Testis (tissue), 5 donors: ENCODE measurements at regions of chr9 and their contacts with region 1.

Region 1: DNA sequence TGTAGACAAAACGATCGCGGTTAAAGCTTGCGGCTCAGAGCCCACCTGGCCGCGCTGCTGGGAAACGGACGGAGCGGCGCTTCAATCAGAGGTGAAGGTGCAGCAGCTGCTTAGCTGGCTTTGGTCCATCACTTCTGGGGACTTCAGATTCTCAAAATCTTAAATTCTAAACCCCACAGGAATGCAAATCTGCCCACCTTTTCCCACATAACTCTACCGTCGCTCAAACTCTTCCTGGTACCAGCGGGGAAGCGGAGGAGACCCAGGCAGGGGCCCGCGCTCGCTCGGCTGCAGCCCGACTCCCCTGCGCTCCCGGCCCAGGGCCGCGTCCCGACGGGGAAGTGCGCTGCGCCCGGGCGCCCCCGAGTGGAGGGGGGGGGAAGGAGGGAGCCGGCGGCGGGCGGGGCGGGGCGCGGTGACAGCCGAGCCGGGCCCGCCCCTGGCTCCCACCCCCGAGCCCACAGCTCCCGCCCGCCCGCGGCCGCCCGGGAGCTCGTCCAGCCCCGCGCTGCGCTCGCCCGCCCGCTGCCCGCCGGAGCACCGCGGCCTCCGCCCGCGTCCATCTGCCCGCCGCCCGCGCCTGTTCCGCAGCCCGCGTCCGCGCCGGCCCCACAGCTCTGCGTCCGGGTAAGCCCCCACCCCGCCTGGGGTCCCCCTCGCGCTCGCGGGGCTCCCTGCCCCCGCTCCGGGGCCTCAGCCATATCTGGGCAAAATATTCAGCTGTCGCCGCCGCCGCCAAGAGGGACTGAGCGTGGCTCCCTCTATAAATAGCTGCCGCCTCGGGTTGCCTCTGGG is at the start of gene TMOD1:
- DNase-seq: peak; percentile 56
- H3K4me3 ChIP-seq: peak within 1 kb of the TSS; percentile 69 to 81
- H3K27ac ChIP-seq: peak within 1 kb of the TSS; percentile 31 to 66
- H3K4me1 ChIP-seq: peaks cover 9% of the 10 kb centered on the region
- H3K27me3 ChIP-seq: no peaks in the 10 kb centered on the region
- CTCF ChIP-seq: peak in 1 of 3 experiments; percentile 13
- POLR2A ChIP-seq: no peak
- total RNA-seq, gene TMOD1: 3.9 TPM

Region 2: DNA sequence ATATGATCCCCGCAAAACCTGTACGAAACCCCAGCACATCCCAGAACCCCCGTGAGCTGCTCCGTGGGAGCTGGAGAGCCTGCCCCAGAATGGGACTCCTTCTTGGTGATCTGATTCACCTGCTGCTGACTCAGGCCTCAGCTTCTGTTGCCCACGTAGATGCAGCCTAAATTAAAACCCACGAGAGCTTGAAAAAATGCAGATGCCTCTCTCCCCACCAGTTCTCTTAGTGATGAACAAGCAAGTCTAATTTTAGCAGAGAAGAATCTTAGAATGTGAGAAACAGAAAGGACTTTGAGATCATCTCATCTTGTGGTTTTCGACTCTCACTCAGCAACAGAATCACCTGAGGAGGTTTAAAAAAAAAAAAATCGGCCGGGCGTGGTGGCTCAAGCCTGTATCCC is 57.7 kb after region 1 on chr9:
- intact Hi-C with region 1: loop called (anchors 10 kb)
- DNase-seq: no peak
- H3K4me3 ChIP-seq: no peak overlapping the region
- H3K27ac ChIP-seq: peak overlapping the region; percentile 95 to 96
- H3K4me1 ChIP-seq: peaks cover 42% of the 10 kb centered on the region
- H3K27me3 ChIP-seq: no peaks in the 10 kb centered on the region
- CTCF ChIP-seq: no peak
- POLR2A ChIP-seq: no peak

Region 3: GRCh38 chr9:97666907-97667686 is 165.7 kb after region 1 on chr9:
- intact Hi-C with region 1: no loop called
- DNase-seq: no peak
- H3K4me3 ChIP-seq: no peak overlapping the region
- H3K27ac ChIP-seq: no peak overlapping the region
- H3K4me1 ChIP-seq: no peaks in the 10 kb centered on the region
- H3K27me3 ChIP-seq: no peaks in the 10 kb centered on the region
- CTCF ChIP-seq: no peak
- POLR2A ChIP-seq: no peak

Region 4: DNA sequence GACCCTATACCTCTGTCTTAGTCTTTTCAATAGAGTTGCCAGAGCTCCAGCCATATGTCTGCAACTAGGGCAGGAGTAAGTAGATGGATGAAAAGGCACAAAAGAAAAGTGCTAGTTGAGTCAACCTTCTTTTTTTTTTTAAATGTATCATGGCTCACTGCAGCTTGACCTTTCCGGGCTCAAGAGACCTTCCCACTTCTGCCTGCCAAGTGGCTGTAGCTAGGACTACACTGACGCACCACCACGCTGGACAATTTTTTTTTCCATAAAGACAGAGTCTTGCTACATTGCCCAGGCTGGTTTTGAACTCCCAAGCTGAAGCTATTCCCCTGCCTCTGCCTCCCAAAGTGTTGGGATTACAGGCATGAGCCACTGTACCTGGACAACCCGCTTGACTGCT is 379.0 kb after region 1 on chr9:
- intact Hi-C with region 1: no loop called
- DNase-seq: no peak
- H3K4me3 ChIP-seq: no peak overlapping the region
- H3K27ac ChIP-seq: no peak overlapping the region
- H3K4me1 ChIP-seq: no peaks in the 10 kb centered on the region
- H3K27me3 ChIP-seq: no peaks in the 10 kb centered on the region
- CTCF ChIP-seq: no peak
- POLR2A ChIP-seq: no peak